ENCODE measurements at regions of chr9 and their contacts with region 1.

Region 1: GRCh38 chr9:19048966-19049916 is at the start of gene RRAGA:
- DNase-seq: peak; percentile 98
- ATAC-seq: peak; percentile 91
- H3K4me3 ChIP-seq: peak within 1 kb of the TSS; percentile 78 to 92 (median 87)
- H3K27ac ChIP-seq: peak within 1 kb of the TSS; percentile 91
- H3K4me1 ChIP-seq: peaks cover 27% of the 10 kb centered on the region
- H3K27me3 ChIP-seq: peaks cover 0 to 7% of the 10 kb centered on the region in 2 experiments; a peak in 1 of 5 replicates
- CTCF ChIP-seq: peak; percentile 98
- EP300 ChIP-seq: peak; percentile 9 to 53; a peak in 2 of 4 replicates
- POLR2A ChIP-seq: peak; percentile 82 to 92
- RAD21 ChIP-seq: peak; percentile 83
- total RNA-seq, gene RRAGA: 37.5 and 56.9 TPM in 2 replicates

Region 2: GRCh38 chr9:19028835-19029451 is 20.3 kb before region 1 on chr9:
- CTCF ChIA-PET with region 1: no interaction called
- POLR2A ChIA-PET with region 1: no interaction called
- in situ Hi-C with region 1: no loop called
- intact Hi-C with region 1: no loop called
- DNase-seq: peak; percentile 54
- ATAC-seq: peak; percentile 87
- H3K4me3 ChIP-seq: no peak overlapping the region
- H3K27ac ChIP-seq: no peak overlapping the region
- H3K4me1 ChIP-seq: no peaks in the 10 kb centered on the region
- H3K27me3 ChIP-seq: peaks cover 0 to 5% of the 10 kb centered on the region in 2 experiments; a peak in 1 of 5 replicates
- CTCF ChIP-seq: peak; percentile 77
- EP300 ChIP-seq: no peak
- POLR2A ChIP-seq: no peak
- RAD21 ChIP-seq: 0 out of 2 replicates have a peak, but pooled peaks have one; percentile 46

Region 3: DNA sequence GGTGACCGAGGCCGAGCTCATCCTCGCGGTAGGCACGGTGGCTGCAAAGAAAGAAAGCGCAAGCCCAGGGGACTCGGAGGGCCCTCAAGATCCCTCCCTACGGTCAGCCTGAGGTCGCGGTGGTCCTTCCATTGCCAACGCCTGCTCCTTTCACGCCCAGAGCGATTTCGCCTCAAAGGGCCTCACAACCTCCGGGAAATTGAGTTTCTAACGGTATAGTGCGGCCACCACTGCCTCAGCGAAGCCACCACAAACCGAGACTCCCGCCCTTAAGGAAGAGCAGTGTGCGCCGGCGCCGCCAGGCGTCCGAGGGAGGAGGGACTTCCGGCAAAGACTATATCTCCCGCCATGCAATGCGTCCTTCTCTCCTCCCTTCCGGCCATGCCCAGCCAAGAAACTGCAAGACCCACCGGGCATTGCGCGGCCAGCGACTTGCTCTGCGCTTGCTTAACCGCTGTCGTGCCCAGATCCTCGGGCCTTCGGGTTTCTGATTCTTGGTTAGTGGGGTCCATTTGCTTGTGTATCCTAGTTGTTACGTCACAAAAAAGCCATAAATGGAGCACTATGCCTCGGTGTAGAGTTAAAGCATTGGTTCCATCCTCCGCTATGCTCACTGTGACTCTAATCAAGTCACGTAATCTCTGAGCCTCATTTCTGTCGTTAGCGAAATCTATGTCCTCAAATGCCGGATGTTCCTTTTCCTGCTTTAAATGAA is 53.5 kb after region 1 on chr9 and contains the start of gene HAUS6:
- CTCF ChIA-PET with region 1: no interaction called
- POLR2A ChIA-PET with region 1: interaction called, 3 read pairs
- in situ Hi-C with region 1: no loop called
- intact Hi-C with region 1: loop called (anchors 1 kb)
- DNase-seq: peak; percentile 93
- ATAC-seq: peak; percentile 99
- H3K4me3 ChIP-seq: peak within 1 kb of the TSS; percentile 80 to 96 (median 81)
- H3K27ac ChIP-seq: peak within 1 kb of the TSS; percentile 72
- H3K4me1 ChIP-seq: peaks cover 41% of the 10 kb centered on the region
- H3K27me3 ChIP-seq: no peaks in the 10 kb centered on the region; a peak in 1 of 5 replicates
- CTCF ChIP-seq: peak; percentile 41
- EP300 ChIP-seq: no peak
- POLR2A ChIP-seq: peak; percentile 75 to 80; a peak in 3 of 4 replicates
- RAD21 ChIP-seq: no peak; the same call in 1 of the 2 replicates
- total RNA-seq, gene HAUS6: 31.1 and 51.3 TPM in 2 replicates

Region 4: DNA sequence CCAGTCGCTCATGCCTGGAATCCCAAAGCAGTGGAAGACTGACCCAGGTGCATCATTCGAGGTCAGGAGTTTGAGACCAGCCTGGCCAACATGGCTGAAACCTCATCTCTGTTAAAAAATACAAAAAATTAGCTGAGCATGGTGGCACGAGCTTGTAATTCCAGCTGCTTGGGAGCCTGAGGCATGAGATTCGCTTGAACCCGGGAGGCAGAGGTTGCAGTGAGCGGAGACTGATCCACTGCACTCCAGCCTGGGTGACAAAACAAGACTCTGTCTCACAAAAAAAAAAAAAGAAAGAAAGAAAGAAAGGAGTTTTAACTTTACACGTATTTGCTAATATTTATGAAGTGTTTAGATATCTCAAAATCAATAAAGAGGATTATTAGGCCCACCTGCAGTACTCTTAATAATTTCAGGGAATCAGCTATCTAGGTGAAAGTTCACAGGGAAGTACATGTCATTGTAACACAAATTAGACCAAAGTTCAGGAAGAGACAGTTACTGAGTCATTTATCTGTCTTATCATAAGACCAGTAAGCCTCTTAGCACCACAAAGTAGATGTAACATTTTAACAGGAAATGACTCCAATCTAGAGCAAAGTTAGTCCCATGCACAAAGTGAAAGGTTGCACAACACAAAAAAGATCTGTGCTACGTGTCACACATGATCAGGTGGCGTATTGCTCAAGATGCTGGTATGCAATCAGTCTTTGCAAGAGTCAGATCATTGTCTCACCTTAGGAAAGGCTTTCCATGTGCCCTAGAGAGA is 112.2 kb after region 1 on chr9:
- CTCF ChIA-PET with region 1: no interaction called
- POLR2A ChIA-PET with region 1: interaction called, 5 read pairs
- in situ Hi-C with region 1: no loop called
- intact Hi-C with region 1: loop called (anchors 2 kb)
- DNase-seq: peak; percentile 100
- ATAC-seq: peak; percentile 88
- H3K4me3 ChIP-seq: peak overlapping the region in 1 of 3 experiments; percentile 18; a peak in 1 of 6 replicates
- H3K27ac ChIP-seq: peak overlapping the region; percentile 99
- H3K4me1 ChIP-seq: peaks cover 90% of the 10 kb centered on the region
- H3K27me3 ChIP-seq: no peaks in the 10 kb centered on the region
- CTCF ChIP-seq: no peak
- EP300 ChIP-seq: peak; percentile 99
- POLR2A ChIP-seq: peak; percentile 46 to 56; a peak in 3 of 4 replicates
- RAD21 ChIP-seq: peak; percentile 43

Region 5: GRCh38 chr9:19201899-19202891 is 153.0 kb after region 1 on chr9:
- CTCF ChIA-PET with region 1: no interaction called
- POLR2A ChIA-PET with region 1: interaction called, 11 read pairs
- in situ Hi-C with region 1: no loop called
- intact Hi-C with region 1: no loop called
- DNase-seq: peak; percentile 92
- ATAC-seq: peak; percentile 92
- H3K4me3 ChIP-seq: peak overlapping the region; percentile 9 to 39 (median 20); a peak in 3 of 6 replicates
- H3K27ac ChIP-seq: peak overlapping the region; percentile 82
- H3K4me1 ChIP-seq: peaks cover 26% of the 10 kb centered on the region
- H3K27me3 ChIP-seq: no peaks in the 10 kb centered on the region
- CTCF ChIP-seq: no peak
- EP300 ChIP-seq: peak; percentile 84 to 96; a peak in 3 of 4 replicates
- POLR2A ChIP-seq: no peak
- RAD21 ChIP-seq: no peak

Region 6: GRCh38 chr9:19379697-19380046 is 330.4 kb after region 1 on chr9:
- CTCF ChIA-PET with region 1: no interaction called
- POLR2A ChIA-PET with region 1: interaction called, 9 read pairs
- in situ Hi-C with region 1: no loop called
- intact Hi-C with region 1: loop called (anchors 10 kb)
- DNase-seq: no peak
- ATAC-seq: peak; percentile 51
- H3K4me3 ChIP-seq: peak overlapping the region; percentile 73 to 98 (median 93)
- H3K27ac ChIP-seq: peak overlapping the region; percentile 91
- H3K4me1 ChIP-seq: peaks cover 31% of the 10 kb centered on the region
- H3K27me3 ChIP-seq: no peaks in the 10 kb centered on the region; a peak in 1 of 5 replicates
- CTCF ChIP-seq: no peak
- EP300 ChIP-seq: no peak
- POLR2A ChIP-seq: no peak
- RAD21 ChIP-seq: no peak

Region 7: DNA sequence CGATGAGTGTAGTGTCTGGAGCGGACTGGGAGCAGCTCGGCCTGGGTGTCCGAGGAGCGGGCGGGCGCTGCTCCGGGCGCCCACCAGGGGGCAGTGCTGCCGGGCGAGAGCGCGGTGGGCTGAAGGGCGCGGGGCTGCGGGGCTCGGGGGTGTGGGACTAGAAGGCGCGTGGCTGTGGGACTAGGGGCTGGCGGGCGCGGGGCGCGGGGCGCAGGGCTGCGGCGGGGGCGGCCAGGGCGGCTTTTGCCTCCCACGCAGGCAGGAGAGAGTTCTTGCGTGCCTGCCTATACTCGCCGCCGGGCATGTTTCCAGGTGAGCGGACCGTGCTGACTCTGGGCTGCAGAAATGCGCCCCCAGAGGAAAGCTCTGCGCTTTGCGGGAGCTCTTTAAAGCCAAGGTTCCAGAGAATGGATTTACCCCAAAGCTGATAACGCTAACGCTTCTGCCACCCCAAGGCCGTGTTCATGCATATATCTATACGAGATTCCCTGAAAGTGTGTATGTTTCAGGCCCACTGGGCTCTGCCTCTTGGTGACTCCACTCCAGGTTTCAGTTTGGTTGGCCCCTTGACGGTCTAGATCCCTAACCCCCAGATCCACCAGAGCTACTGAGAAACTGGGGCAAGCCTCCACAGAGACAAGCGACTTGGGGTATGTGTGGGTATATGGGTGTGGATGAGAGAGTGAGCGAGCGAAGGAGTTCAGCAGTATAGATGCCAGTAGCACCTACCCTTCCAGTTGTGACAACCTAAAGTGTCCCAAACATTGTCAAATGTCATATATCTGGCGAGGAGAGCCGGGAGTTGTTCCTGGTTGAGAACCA is 415.7 kb after region 1 on chr9:
- CTCF ChIA-PET with region 1: no interaction called
- POLR2A ChIA-PET with region 1: interaction called, 8 read pairs
- in situ Hi-C with region 1: loop called (anchors 10 kb)
- intact Hi-C with region 1: no loop called
- DNase-seq: peak; percentile 73
- ATAC-seq: peak; percentile 96
- H3K4me3 ChIP-seq: peak overlapping the region; percentile 56 to 73 (median 63); a peak in 5 of 6 replicates
- H3K27ac ChIP-seq: no peak overlapping the region
- H3K4me1 ChIP-seq: peaks cover 11% of the 10 kb centered on the region
- H3K27me3 ChIP-seq: peaks cover 0 to 10% of the 10 kb centered on the region in 2 experiments; a peak in 3 of 5 replicates
- CTCF ChIP-seq: peak; percentile 81
- EP300 ChIP-seq: no peak
- POLR2A ChIP-seq: no peak
- RAD21 ChIP-seq: 0 out of 2 replicates have a peak, but pooled peaks have one; percentile 9